PC-3 (cell line): ENCODE measurements at regions of chr2 and their contacts with region 1.

Region 1: DNA sequence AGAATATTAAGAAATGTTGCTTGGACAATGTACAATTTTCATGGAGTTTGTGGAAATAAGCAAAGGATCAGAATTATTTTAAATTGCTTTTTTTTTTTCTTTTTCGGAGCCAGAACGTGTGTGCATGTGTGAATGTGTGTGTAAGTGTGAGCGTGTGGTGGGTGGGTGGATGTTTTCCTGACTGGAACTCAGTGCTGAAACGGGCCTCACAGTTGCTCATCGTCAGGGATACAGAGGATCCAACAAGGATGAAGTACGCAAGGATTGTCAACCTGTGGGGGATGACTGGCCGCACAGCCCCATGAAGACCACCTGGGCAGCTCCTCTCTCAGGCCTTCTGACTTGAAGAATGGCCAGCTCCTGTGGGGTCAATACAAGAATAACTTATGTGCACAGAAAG is 17.5 kb downstream of the IL1B start:
- DNase-seq: no peak
- ATAC-seq: no peak
- H3K4me3 ChIP-seq: no peak overlapping the region
- H3K27ac ChIP-seq: no peak overlapping the region
- H3K4me1 ChIP-seq: peaks cover 2% of the 10 kb centered on the region
- H3K27me3 ChIP-seq: no peaks in the 10 kb centered on the region
- CTCF ChIP-seq: no peak

Region 2: GRCh38 chr2:112181571-112182290 is 637.4 kb before region 1 on chr2:
- CTCF ChIA-PET with region 1: no interaction called
- POLR2A ChIA-PET with region 1: interaction called, 10 read pairs
- intact Hi-C with region 1: no loop called
- DNase-seq: no peak
- ATAC-seq: no peak
- H3K4me3 ChIP-seq: no peak overlapping the region
- H3K27ac ChIP-seq: no peak overlapping the region
- H3K4me1 ChIP-seq: no peaks in the 10 kb centered on the region
- H3K27me3 ChIP-seq: no peaks in the 10 kb centered on the region
- CTCF ChIP-seq: no peak

Region 3: DNA sequence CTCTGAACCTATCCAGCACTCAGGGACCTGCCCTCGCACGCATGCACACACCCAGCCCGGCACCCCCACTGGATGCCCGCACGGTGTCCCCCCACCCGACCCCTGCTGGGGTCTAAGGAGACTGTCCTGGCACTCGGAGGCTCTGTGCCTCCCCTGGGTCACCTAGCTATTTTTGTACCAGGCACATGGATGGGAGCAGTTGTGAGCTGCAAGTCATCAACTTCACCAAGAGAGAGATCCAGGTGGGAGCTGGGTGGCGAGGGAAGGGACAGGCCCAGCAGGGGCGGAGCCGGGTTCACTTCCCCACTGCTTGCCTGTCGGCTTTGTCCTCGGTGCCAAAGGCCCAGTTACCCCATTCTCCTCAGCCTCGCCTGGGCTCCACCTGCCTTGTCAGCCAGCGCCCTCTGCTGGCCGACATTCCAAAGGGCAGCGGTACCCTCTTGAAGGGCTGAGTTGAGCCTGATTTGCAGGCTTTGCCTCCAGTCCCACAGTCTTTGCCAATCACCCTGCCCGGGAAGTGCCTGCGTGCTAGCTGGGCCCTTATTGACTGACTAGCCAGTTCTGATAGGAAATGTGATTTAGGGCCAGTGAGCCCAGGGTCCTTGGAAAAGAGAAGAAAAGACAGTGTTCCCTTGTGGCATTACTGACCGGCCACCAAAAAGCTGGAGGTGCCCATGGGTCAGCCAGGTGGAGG is 92.4 kb before region 1 on chr2:
- CTCF ChIA-PET with region 1: no interaction called
- POLR2A ChIA-PET with region 1: no interaction called
- intact Hi-C with region 1: no loop called
- DNase-seq: peak; percentile 99
- ATAC-seq: peak; percentile 92
- H3K4me3 ChIP-seq: no peak overlapping the region
- H3K27ac ChIP-seq: peak overlapping the region; percentile 80
- H3K4me1 ChIP-seq: peaks cover 16% of the 10 kb centered on the region
- H3K27me3 ChIP-seq: no peaks in the 10 kb centered on the region
- CTCF ChIP-seq: peak; percentile 94